ENCODE measurements at regions of chr4 and their contacts with region 1.

Region 1: DNA sequence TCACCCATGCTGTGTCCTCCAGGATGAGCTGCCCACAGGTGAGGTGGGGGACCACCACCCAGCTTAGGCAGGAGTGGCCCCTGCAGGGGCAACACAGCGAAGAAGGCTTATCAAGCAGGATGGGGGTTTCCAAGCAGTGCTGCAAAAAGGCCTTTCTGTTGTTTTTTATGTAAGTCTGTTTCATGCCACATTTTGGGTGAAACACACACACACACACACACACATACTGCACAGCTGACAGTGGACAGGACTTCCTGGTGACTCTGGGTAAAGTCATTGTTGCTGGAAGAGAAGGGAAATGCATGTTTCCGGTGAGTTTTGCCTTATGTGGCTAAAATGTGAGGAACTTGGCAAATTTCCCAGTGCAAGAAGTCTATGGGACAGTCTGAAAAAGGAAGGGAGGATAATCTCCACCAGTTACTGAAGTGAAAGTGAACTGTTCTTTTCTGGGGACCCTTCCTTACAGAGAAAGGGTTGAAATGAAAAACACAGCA is 119.2 kb downstream of the IRF2 start:
- DNase-seq: peak; percentile 98
- H3K4me3 ChIP-seq: no peak overlapping the region
- H3K27ac ChIP-seq: peak overlapping the region; percentile 72
- H3K4me1 ChIP-seq: peaks cover 13% of the 10 kb centered on the region
- H3K27me3 ChIP-seq: no peaks in the 10 kb centered on the region
- CTCF ChIP-seq: no peak
- POLR2A ChIP-seq: peak; percentile 73

Region 2: GRCh38 chr4:184370711-184371389 is 15.7 kb after region 1 on chr4:
- CTCF ChIA-PET with region 1: interaction called, 6 read pairs
- POLR2A ChIA-PET with region 1: interaction called, 3 read pairs
- dilution Hi-C with region 1: no loop called
- intact Hi-C with region 1: loop called (anchors 1 kb)
- DNase-seq: peak; percentile 42
- H3K4me3 ChIP-seq: no peak overlapping the region
- H3K27ac ChIP-seq: peak overlapping the region; percentile 3
- H3K4me1 ChIP-seq: peaks cover 14% of the 10 kb centered on the region
- H3K27me3 ChIP-seq: no peaks in the 10 kb centered on the region
- CTCF ChIP-seq: no peak
- POLR2A ChIP-seq: no peak

Region 3: GRCh38 chr4:184408021-184408710 is 53.0 kb after region 1 on chr4:
- CTCF ChIA-PET with region 1: no interaction called
- POLR2A ChIA-PET with region 1: no interaction called
- dilution Hi-C with region 1: no loop called
- intact Hi-C with region 1: loop called (anchors 1 kb)
- DNase-seq: peak; percentile 21
- H3K4me3 ChIP-seq: no peak overlapping the region
- H3K27ac ChIP-seq: peak overlapping the region; percentile 6
- H3K4me1 ChIP-seq: peaks cover 25% of the 10 kb centered on the region
- H3K27me3 ChIP-seq: no peaks in the 10 kb centered on the region
- CTCF ChIP-seq: no peak
- POLR2A ChIP-seq: no peak

Region 4: DNA sequence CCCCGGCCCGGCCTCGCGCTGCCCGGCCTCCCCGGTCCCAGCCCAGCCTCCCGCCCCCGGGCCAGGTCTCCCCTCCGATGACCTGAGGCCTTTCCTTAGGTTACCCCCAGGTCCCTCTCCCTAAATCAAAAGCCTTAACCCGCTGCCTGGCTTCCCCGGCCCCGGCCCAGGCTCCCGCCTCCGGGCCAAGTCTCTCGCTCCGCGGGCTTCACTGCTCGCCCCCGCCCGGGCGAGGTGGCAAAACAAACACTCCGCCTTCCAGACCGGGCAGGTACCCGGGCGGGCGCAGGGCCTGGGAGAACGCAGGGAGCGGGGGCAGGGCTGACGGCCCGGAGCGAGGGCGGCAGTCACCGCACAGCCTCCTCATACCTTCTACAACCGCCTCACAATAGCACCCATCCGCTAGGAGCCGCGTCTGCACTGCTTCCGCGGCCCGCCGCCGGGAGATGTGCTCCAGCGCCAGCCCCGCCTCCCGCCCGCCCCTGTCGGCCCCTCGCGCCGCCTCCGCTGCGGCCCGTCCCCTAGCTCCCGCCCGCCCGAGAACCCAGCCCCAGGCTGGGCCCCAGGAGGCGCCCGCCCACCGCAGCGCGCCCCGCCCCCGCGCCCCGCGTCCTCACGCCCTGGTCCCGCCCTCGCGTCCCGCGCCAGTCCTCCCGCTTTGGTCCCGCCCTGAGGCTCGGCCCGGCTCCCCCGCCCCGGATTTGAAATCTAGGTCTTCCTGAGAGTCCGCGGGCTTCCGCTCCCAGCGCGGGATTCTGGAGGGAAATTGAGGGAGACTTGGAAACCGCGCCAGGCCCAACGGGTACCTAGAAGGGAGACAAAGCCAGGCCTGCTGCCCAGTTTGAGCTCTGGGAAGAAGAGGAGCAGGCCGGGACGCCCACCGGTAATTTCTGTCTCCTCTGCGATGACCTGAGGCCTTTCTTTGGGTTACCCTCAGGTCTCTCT is 294.1 kb after region 1 on chr4 and contains the starts of genes CASP3 and PRIMPOL:
- CTCF ChIA-PET with region 1: no interaction called
- POLR2A ChIA-PET with region 1: no interaction called
- dilution Hi-C with region 1: no loop called
- intact Hi-C with region 1: no loop called
- DNase-seq: peak; percentile 97
- H3K4me3 ChIP-seq: peak within 1 kb of the TSS; percentile 49 to 89 (median 78)
- H3K27ac ChIP-seq: peak within 1 kb of the TSS; percentile 96
- H3K4me1 ChIP-seq: peaks cover 44% of the 10 kb centered on the region
- H3K27me3 ChIP-seq: no peaks in the 10 kb centered on the region
- CTCF ChIP-seq: peak in 1 of 2 donors; percentile 37
- POLR2A ChIP-seq: peak; percentile 87
- total RNA-seq, gene CASP3: 54.5 and 66.1 TPM in 2 replicates
- total RNA-seq, gene PRIMPOL: 11.1 and 13.6 TPM in 2 replicates

Measured in endothelial cell of umbilical vein (primary cell).